ENCODE measurements at regions of chr6 and their contacts with region 1.

Region 1: DNA sequence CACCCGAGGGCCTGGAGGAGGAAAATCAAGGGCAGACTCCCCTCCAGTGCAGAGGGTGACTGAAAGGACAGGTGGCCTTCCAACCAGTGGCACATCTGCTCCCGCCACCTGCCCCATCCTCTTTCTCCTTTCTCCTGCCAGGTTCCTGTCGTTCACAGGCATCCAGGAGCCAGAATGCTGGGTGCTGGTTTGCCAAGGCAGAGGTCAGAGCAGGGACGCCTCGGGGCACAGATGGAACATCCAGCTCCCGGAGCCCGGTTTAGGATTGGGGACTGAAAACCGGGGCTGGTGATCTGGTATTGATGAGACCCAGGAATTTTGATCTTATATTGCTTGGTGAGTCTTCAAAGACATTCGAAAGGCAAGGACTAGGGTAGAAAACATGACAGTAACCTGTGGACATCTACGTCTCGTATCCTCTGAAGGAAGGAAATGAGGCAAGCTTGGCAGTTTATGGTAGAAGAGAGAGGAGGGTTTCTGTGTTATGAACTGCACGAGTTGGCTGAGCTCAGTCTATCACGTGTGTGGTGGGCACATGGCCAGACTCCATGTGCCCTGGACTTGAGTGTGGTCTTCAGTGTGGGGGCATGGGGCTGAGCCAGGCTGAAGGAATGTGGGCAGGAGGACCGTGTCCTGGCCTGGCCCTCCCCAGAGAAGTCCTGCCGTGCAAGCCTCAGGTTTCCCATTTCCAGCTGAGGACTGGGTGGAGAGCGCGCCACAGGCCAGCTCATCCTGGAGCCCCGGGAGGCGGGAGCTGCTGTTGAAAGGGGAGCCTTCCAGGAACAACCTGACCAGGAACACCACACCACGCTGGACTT is 74.2 kb downstream of the IRF4 start:
- DNase-seq: no peak
- ATAC-seq: no peak
- H3K4me3 ChIP-seq: no peak overlapping the region
- H3K27ac ChIP-seq: no peak overlapping the region
- H3K4me1 ChIP-seq: no peaks in the 10 kb centered on the region
- H3K27me3 ChIP-seq: peaks cover 66% of the 10 kb centered on the region
- CTCF ChIP-seq: no peak

Region 2: GRCh38 chr6:1110164-1110563 is 644.4 kb after region 1 on chr6:
- CTCF ChIA-PET with region 1: no interaction called
- POLR2A ChIA-PET with region 1: interaction called, 12 read pairs
- intact Hi-C with region 1: no loop called
- DNase-seq: peak; percentile 15
- ATAC-seq: peak; percentile 33; the same call in 1 of the 2 replicates
- H3K4me3 ChIP-seq: no peak overlapping the region
- H3K27ac ChIP-seq: no peak overlapping the region
- H3K4me1 ChIP-seq: no peaks in the 10 kb centered on the region
- H3K27me3 ChIP-seq: peaks cover 73% of the 10 kb centered on the region
- CTCF ChIP-seq: no peak; the same call in 1 of the 2 replicates